Activated CD4-positive, alpha-beta T cell treated with anti-CD3 and anti-CD28 coated beads for 36 hours (primary cell): ENCODE measurements at regions of chr19 and their contacts with region 1.

Region 1: DNA sequence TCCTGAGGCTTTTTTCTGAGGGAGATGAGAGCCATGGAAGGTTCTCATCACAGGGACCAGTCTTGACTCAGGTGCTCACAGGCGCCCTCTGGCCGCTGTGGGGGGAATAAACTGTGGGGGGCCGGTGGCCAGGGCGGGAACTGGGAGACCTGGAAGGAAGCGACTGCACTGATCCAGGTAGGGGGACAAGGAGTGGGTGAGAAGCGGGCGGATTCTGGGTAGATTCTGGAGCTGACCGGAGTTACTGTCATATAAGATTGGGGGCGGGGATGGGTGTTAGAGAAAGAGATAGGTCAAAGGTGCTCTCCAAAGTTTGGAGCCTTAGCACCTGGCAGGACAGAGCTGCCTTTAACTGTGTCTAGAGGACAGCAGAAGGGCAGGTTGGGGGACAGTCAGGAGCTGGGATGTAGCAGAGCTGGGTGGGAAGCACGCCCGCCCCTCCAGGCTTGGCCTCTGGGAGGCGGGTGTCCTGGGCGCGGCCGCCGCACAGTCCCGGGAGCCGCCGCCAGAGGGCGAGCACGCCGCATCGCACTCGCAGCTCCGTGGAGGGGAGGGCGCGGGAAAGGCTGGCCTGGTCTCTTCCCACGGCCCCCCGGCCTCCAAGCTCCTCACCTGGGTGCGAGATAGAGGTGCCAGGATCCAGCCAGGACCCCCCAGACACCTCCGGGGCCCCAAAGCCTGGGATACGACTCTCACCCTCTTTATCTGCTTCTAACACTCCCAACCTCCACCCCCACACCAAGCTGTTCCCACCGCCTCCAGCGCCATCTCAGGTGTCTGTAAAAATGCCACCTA is 4.2 kb upstream of the DAND5 start:
- DNase-seq: peak; percentile 91
- ATAC-seq: peak; percentile 92
- H3K4me3 Mint-ChIP-seq: peak overlapping the region; percentile 73
- H3K27ac Mint-ChIP-seq: peak overlapping the region; percentile 89
- H3K4me1 Mint-ChIP-seq: peaks cover 11% of the 10 kb centered on the region
- H3K27me3 Mint-ChIP-seq: no peaks in the 10 kb centered on the region

Region 2: GRCh38 chr19:12890787-12891552 is 74.2 kb before region 1 on chr19 and contains the start of gene GCDH:
- CTCF ChIA-PET with region 1: interaction called, 36 read pairs
- POLR2A ChIA-PET with region 1: no interaction called
- intact Hi-C with region 1: loop called in 1 of 2 experiments (anchors 2 kb)
- DNase-seq: peak; percentile 98
- ATAC-seq: peak; percentile 98
- H3K4me3 Mint-ChIP-seq: peak within 1 kb of the TSS; percentile 100
- H3K27ac Mint-ChIP-seq: peak within 1 kb of the TSS; percentile 90
- H3K4me1 Mint-ChIP-seq: peaks cover 18% of the 10 kb centered on the region
- H3K27me3 Mint-ChIP-seq: no peaks in the 10 kb centered on the region
- total RNA-seq, gene GCDH: 36.2 to 41.1 TPM

Region 3: DNA sequence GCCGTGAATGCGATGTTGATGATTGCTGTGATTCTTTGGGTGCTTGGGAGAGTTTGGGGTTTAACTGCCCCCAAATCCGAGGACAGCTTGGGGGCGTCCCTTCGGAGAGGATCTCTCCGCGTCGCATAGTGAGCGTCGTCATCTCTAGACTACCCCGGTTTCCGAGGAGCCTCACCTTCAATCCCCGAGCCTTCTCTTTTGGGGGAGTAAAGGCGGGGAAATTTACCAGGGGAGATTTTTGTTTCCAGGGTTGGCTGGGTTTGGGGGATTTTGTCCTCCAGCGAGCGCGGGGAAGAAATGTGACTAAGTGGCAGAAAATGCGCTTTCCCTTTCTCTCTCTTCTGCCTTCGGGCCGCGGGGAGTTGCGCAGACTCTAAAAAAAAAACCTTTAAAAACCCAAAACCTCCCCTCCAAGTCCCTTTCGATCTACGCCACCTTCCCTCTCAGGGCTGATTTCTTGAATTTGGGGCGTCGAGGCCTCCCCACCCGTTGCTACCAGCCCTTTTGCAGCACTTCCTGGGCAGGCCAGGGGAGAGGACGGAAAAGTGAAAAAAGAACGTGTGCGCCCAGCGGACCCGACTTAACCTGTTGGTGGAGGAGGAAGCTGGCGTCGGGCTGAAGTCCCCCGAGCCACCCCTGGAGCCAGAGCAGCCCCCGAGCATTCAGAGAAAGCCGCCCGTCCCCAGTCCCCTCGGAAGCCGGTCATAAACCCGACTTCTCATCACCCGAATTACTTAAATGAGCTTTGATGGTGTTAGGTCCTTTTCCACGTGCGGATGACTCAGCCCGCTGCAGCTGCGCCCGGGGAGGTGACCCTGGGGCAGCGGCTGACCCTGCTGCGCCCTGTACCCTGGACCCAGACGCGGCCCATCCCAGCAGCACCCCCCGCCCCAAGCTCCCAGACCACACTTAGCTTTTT is 47.7 kb after region 1 on chr19:
- CTCF ChIA-PET with region 1: interaction called, 13 read pairs
- POLR2A ChIA-PET with region 1: no interaction called
- intact Hi-C with region 1: no loop called
- DNase-seq: peak; percentile 67
- ATAC-seq: peak; percentile 59
- H3K4me3 Mint-ChIP-seq: peak overlapping the region; percentile 72
- H3K27ac Mint-ChIP-seq: peak overlapping the region; percentile 79
- H3K4me1 Mint-ChIP-seq: peaks cover 22% of the 10 kb centered on the region
- H3K27me3 Mint-ChIP-seq: peaks cover 63% of the 10 kb centered on the region

Region 4: GRCh38 chr19:13044231-13044836 is 79.1 kb after region 1 on chr19:
- CTCF ChIA-PET with region 1: interaction called, 5 read pairs
- POLR2A ChIA-PET with region 1: interaction called, 10 read pairs
- intact Hi-C with region 1: no loop called
- DNase-seq: peak; percentile 23
- ATAC-seq: peak; percentile 61
- H3K4me3 Mint-ChIP-seq: no peak overlapping the region
- H3K27ac Mint-ChIP-seq: peak overlapping the region; percentile 55
- H3K4me1 Mint-ChIP-seq: peaks cover 10% of the 10 kb centered on the region
- H3K27me3 Mint-ChIP-seq: no peaks in the 10 kb centered on the region

Region 5: DNA sequence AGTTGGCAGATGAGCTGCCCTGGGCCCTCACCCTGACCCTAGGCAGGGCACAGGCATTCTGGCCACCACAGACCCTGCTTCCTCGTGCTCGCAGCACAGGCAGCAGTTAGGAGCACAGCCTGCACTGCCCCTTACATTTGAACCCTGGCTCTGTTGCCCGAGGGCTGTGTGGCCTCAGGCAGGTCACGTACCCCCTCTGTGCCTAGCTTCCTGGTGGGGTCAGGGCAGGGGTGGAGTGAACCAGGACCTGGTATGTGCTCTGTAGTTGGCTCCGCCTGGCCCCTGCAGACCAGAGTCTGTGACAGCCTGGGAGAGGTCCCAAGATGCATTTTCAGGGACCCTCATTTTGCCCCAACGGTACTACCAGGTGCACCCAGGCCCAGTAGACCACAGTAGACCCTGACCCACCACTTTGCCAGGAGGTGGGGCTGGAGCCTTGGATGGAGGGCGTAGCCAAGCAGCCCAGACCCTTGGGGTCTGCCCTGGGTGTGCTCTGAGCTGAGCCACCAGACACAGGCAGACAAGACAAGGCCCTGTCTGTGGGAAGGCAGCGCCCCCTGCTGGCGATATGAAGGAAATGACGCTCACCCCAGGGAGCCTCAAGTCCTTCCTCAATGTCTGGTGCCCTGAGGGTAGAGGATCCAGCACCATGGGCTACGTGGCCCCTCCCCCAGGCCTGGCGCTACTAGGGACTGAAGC is 128.3 kb after region 1 on chr19:
- CTCF ChIA-PET with region 1: interaction called, 34 read pairs
- POLR2A ChIA-PET with region 1: interaction called, 3 read pairs
- intact Hi-C with region 1: loop called in 1 of 2 experiments (anchors 1 kb)
- DNase-seq: peak; percentile 90
- ATAC-seq: peak; percentile 89
- H3K4me3 Mint-ChIP-seq: no peak overlapping the region
- H3K27ac Mint-ChIP-seq: no peak overlapping the region
- H3K4me1 Mint-ChIP-seq: peaks cover 23% of the 10 kb centered on the region
- H3K27me3 Mint-ChIP-seq: peaks cover 29% of the 10 kb centered on the region

Region 6: DNA sequence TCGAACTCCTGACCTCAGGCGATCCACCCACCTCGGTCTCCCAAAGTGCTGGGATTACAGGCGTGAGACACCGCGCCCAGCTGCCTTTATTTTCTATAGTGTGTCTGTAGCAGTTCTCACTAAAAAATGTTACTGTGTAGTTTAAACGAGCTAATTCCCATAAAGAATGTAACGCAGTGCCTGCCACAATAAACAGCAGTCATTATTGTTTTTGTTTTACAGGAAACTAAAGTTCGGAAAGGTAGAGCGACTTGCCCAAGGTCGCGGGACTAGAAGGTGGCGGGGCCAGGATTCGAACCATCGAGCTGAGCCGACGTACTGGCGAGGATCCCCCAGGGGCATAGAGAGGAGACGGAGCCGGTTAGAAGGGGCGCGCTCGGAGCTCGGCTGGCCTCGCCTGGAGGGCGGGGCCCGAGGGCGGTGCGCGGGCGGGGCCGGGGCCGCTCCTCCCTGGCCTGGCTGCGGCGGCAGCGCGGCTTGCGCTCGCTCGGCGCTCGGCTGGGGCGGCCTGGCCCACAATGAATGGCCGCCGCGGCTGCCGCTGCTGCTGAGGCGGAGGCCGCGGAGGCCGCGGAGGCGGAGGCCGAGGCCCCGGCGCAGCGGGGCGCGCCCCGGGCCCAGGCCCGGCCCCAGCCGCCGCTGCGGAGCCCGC is 152.7 kb after region 1 on chr19 and contains the start of gene NACC1:
- CTCF ChIA-PET with region 1: interaction called, 10 read pairs
- POLR2A ChIA-PET with region 1: no interaction called
- intact Hi-C with region 1: no loop called
- DNase-seq: peak; percentile 95
- ATAC-seq: peak; percentile 85
- H3K4me3 Mint-ChIP-seq: peak within 1 kb of the TSS; percentile 87
- H3K27ac Mint-ChIP-seq: peak within 1 kb of the TSS; percentile 95
- H3K4me1 Mint-ChIP-seq: peaks cover 49% of the 10 kb centered on the region
- H3K27me3 Mint-ChIP-seq: no peaks in the 10 kb centered on the region
- total RNA-seq, gene NACC1: 77.5 to 84.5 TPM

Region 7: GRCh38 chr19:13138916-13139198 is 173.6 kb after region 1 on chr19:
- CTCF ChIA-PET with region 1: no interaction called
- POLR2A ChIA-PET with region 1: no interaction called
- intact Hi-C with region 1: no loop called
- DNase-seq: no peak
- ATAC-seq: no peak
- H3K4me3 Mint-ChIP-seq: no peak overlapping the region
- H3K27ac Mint-ChIP-seq: no peak overlapping the region
- H3K4me1 Mint-ChIP-seq: peaks cover 4% of the 10 kb centered on the region
- H3K27me3 Mint-ChIP-seq: no peaks in the 10 kb centered on the region